HAP-1 (cell line): ENCODE measurements at regions of chr4 and their contacts with region 1.

Region 1: DNA sequence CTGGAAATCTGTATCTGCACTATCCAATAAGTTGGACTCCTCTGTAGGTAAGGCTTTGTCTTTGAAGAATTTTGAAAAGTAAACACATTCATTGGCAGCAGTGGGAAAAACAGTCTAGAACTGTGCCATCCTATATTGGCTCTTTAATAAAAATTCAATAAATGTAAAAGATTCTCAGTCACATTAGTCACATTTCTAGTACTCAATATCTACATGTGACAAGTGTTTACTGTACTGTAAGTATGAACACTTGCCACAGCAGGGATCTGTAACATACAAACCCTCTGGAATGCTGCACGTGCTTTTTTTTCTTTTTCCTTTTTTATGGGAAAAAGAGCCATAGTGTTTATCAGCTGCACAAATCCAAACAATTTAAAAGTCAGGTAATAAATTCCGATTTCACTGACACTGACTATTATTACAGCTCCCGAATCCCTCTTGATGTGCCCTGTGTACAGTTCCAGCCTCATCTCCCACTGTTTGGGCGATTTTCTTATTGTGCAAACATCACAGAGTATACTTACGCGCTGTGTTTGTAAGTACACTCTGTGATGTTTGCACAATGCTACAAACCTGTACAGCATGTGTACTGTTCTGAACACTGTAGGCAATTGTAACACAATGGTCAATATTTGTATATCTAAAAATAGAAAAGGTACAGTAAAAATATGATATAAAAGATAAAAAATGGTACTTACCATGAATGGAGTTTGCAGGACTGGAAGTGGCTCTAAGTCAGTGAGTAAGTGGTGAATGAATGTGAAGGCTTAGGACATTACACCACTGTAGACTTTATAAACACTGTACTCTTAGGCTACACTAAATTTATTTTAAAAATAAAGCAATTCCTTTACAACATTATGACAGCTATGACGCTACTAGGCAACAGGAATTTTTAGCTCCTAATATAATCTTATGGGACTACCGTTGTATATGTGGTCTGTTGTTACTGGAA is 8.7 kb downstream of the PYURF start:
- DNase-seq: no peak
- H3K4me3 ChIP-seq: no peak overlapping the region
- H3K4me1 ChIP-seq: peaks cover 9% of the 10 kb centered on the region
- H3K27me3 ChIP-seq: no peaks in the 10 kb centered on the region

Region 2: GRCh38 chr4:88033309-88033708 is 481.5 kb before region 1 on chr4:
- in situ Hi-C with region 1: loop called (anchors 10 kb)
- DNase-seq: peak; percentile 63 to 66
- H3K4me3 ChIP-seq: no peak overlapping the region
- H3K4me1 ChIP-seq: no peaks in the 10 kb centered on the region
- H3K27me3 ChIP-seq: no peaks in the 10 kb centered on the region

Region 3: DNA sequence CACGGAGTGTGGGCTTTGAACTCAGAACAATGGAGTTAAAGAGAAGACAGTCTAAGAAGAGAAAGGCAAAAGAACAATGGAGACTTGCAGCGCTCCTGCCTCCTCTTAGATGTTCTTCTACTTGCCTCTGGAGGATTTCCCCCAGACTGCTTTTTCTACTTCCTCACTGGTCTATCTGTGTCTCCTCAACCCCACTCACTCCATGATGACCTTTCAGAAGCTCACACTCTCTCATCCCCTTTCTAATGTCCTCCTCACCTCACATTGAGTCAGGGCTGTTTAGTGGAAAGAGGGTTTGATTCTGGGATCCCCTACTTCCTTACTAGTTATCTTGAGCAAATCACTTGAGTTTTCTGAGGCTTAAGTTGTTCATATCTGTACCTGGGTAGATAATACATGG is 148.4 kb before region 1 on chr4:
- in situ Hi-C with region 1: loop called (anchors 5 kb)
- DNase-seq: no peak
- H3K4me3 ChIP-seq: no peak overlapping the region
- H3K4me1 ChIP-seq: no peaks in the 10 kb centered on the region
- H3K27me3 ChIP-seq: no peaks in the 10 kb centered on the region